ENCODE measurements at regions of chr1 and their contacts with region 1.

Region 1: GRCh38 chr1:17281775-17282181 is 26.2 kb upstream of the PADI4 start:
- DNase-seq: peak; percentile 81 to 90 (median 87)
- H3K4me3 ChIP-seq: peak overlapping the region in 1 of 3 experiments; percentile 60
- H3K4me3 Mint-ChIP-seq: peak overlapping the region; percentile 63 to 88
- H3K27ac ChIP-seq: peak overlapping the region; percentile 62 to 65
- H3K27ac Mint-ChIP-seq: peak overlapping the region; percentile 91 to 98 (median 95)
- H3K4me1 ChIP-seq: peaks cover 70 to 78% of the 10 kb centered on the region in 2 donors
- H3K4me1 Mint-ChIP-seq: peaks cover 84% of the 10 kb centered on the region
- H3K27me3 ChIP-seq: no peaks in the 10 kb centered on the region
- H3K27me3 Mint-ChIP-seq: peaks cover 0 to 4% (median 0%) of the 10 kb centered on the region in 3 donors
- CTCF ChIP-seq: no peak

Region 2: DNA sequence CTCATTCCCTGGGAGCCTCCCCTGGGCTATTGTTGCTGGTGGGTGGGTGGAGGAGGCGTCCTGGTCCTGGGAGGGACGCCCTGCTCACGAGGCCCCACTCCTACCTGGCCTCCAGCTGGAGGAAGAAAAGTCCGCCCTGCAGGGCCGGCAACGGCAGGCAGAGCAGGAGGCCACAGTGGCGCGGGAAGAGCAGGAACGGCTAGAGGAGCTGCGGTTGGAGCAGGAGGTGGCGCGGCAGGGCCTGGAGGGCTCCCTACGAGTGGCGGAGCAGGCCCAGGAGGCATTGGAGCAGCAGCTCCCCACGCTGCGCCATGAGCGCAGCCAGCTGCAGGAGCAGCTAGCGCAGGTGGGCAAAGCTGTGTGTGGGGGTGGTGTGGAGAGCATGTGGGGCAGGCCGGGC is 335.1 kb before region 1 on chr1:
- intact Hi-C with region 1: no loop called
- DNase-seq: no peak
- H3K4me3 ChIP-seq: no peak overlapping the region
- H3K4me3 Mint-ChIP-seq: no peak overlapping the region
- H3K27ac ChIP-seq: no peak overlapping the region
- H3K27ac Mint-ChIP-seq: no peak overlapping the region
- H3K4me1 ChIP-seq: no peaks in the 10 kb centered on the region
- H3K4me1 Mint-ChIP-seq: no peaks in the 10 kb centered on the region
- H3K27me3 ChIP-seq: no peaks in the 10 kb centered on the region
- H3K27me3 Mint-ChIP-seq: peaks cover 0 to 2% (median 0%) of the 10 kb centered on the region in 3 donors
- CTCF ChIP-seq: no peak

Region 3: DNA sequence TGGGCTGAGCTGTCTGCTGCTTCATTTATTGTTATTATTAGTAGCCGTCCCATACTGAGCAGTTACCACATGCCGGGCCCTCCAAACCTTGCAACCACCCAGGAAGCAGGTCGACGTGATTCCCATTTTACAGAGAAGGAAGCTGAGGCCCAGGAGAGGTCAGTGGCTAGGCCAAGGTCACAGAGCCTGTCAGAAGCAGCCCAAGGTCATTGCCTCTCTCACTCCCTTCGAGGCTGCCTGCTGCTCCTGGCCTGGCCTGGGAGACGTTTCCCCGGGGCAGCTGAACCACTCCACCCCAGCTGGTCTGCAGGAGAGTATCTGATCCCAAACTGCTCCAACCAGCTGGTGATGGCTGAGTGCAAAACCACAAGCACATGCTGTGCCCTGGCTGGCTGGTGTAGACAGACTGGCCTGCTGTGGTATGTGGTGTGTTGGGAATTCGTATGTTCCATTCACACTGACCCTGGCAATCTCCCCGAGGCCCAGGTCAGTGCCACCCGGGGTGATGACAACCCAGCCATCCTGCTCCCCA is 32.8 kb after region 1 on chr1:
- intact Hi-C with region 1: loop called in 1 of 2 experiments (anchors 5 kb)
- DNase-seq: no peak
- H3K4me3 ChIP-seq: no peak overlapping the region
- H3K4me3 Mint-ChIP-seq: no peak overlapping the region
- H3K27ac ChIP-seq: peak overlapping the region in 1 of 2 donors; percentile 34
- H3K27ac Mint-ChIP-seq: peak overlapping the region in 4 of 7 donors; percentile 1 to 51 (median 22)
- H3K4me1 ChIP-seq: peaks cover 39 to 52% of the 10 kb centered on the region in 2 donors
- H3K4me1 Mint-ChIP-seq: peaks cover 68% of the 10 kb centered on the region
- H3K27me3 ChIP-seq: no peaks in the 10 kb centered on the region
- H3K27me3 Mint-ChIP-seq: peaks cover 0 to under 1% (median 0%) of the 10 kb centered on the region in 3 donors
- CTCF ChIP-seq: no peak

Region 4: GRCh38 chr1:17370618-17371017 is 88.8 kb after region 1 on chr1:
- intact Hi-C with region 1: no loop called
- DNase-seq: no peak
- H3K4me3 ChIP-seq: no peak overlapping the region
- H3K4me3 Mint-ChIP-seq: no peak overlapping the region
- H3K27ac ChIP-seq: no peak overlapping the region
- H3K27ac Mint-ChIP-seq: peak overlapping the region in 1 of 7 donors; percentile 42
- H3K4me1 ChIP-seq: peaks cover 2 to 6% of the 10 kb centered on the region in 2 donors
- H3K4me1 Mint-ChIP-seq: peaks cover 2% of the 10 kb centered on the region
- H3K27me3 ChIP-seq: no peaks in the 10 kb centered on the region
- H3K27me3 Mint-ChIP-seq: peaks cover 2 to 6% (median 5%) of the 10 kb centered on the region in 3 donors
- CTCF ChIP-seq: no peak

Region 5: GRCh38 chr1:18100491-18101063 is 818.8 kb after region 1 on chr1:
- intact Hi-C with region 1: no loop called
- DNase-seq: peak; percentile 25 to 38 (median 38)
- H3K4me3 ChIP-seq: no peak overlapping the region
- H3K4me3 Mint-ChIP-seq: no peak overlapping the region
- H3K27ac ChIP-seq: no peak overlapping the region
- H3K27ac Mint-ChIP-seq: no peak overlapping the region
- H3K4me1 ChIP-seq: no peaks in the 10 kb centered on the region
- H3K4me1 Mint-ChIP-seq: no peaks in the 10 kb centered on the region
- H3K27me3 ChIP-seq: peaks cover 0 to 7% of the 10 kb centered on the region in 2 donors
- H3K27me3 Mint-ChIP-seq: peaks cover 14 to 22% (median 14%) of the 10 kb centered on the region in 3 donors
- CTCF ChIP-seq: peak; percentile 83

Measured in CD14-positive monocyte (primary cell).